SK-N-SH (cell line): ENCODE measurements at regions of chrX and their contacts with region 1.

Region 1: GRCh38 chrX:106894392-106894909 is 8.7 kb downstream of the RIPPLY1 start:
- DNase-seq: peak; percentile 59
- H3K4me3 ChIP-seq: peak overlapping the region in 1 of 2 experiments; percentile 18; a peak in 1 of 4 replicates
- H3K27ac ChIP-seq: peak overlapping the region in 1 of 2 experiments; percentile 40; a peak in 2 of 4 replicates
- H3K4me1 ChIP-seq: peaks cover 0 to 13% of the 10 kb centered on the region in 2 experiments; a peak in 3 of 4 replicates
- H3K27me3 ChIP-seq: peaks cover 26% of the 10 kb centered on the region
- CTCF ChIP-seq: peak; percentile 88
- EP300 ChIP-seq: no peak
- RAD21 ChIP-seq: peak; percentile 82

Region 2: GRCh38 chrX:106726485-106727437 is 167.7 kb before region 1 on chrX and contains the start of gene RNF128:
- CTCF ChIA-PET with region 1: no interaction called
- POLR2A ChIA-PET with region 1: no interaction called
- DNase-seq: peak; percentile 12
- H3K4me3 ChIP-seq: peak within 1 kb of the TSS in 1 of 2 experiments; percentile 28; a peak in 2 of 4 replicates
- H3K27ac ChIP-seq: no peak within 1 kb of the TSS
- H3K4me1 ChIP-seq: no peaks in the 10 kb centered on the region
- H3K27me3 ChIP-seq: peaks cover 51% of the 10 kb centered on the region
- CTCF ChIP-seq: no peak
- EP300 ChIP-seq: no peak
- RAD21 ChIP-seq: no peak
- polyA plus RNA-seq, gene RNF128: not detected in 2 replicates

Region 3: GRCh38 chrX:106874075-106874474 is 20.4 kb before region 1 on chrX:
- CTCF ChIA-PET with region 1: interaction called, 33 read pairs
- POLR2A ChIA-PET with region 1: no interaction called
- DNase-seq: peak; percentile 10
- H3K4me3 ChIP-seq: no peak overlapping the region
- H3K27ac ChIP-seq: no peak overlapping the region
- H3K4me1 ChIP-seq: no peaks in the 10 kb centered on the region
- H3K27me3 ChIP-seq: peaks cover 34% of the 10 kb centered on the region; the same call in 1 of the 2 replicates
- CTCF ChIP-seq: peak; percentile 84
- EP300 ChIP-seq: no peak
- RAD21 ChIP-seq: peak; percentile 62

Region 4: GRCh38 chrX:106906361-106906760 is 11.9 kb after region 1 on chrX:
- CTCF ChIA-PET with region 1: interaction called, 35 read pairs
- POLR2A ChIA-PET with region 1: no interaction called
- DNase-seq: no peak
- H3K4me3 ChIP-seq: no peak overlapping the region
- H3K27ac ChIP-seq: no peak overlapping the region
- H3K4me1 ChIP-seq: no peaks in the 10 kb centered on the region
- H3K27me3 ChIP-seq: peaks cover 18% of the 10 kb centered on the region; the same call in 1 of the 2 replicates
- CTCF ChIP-seq: no peak
- EP300 ChIP-seq: no peak
- RAD21 ChIP-seq: no peak

Region 5: DNA sequence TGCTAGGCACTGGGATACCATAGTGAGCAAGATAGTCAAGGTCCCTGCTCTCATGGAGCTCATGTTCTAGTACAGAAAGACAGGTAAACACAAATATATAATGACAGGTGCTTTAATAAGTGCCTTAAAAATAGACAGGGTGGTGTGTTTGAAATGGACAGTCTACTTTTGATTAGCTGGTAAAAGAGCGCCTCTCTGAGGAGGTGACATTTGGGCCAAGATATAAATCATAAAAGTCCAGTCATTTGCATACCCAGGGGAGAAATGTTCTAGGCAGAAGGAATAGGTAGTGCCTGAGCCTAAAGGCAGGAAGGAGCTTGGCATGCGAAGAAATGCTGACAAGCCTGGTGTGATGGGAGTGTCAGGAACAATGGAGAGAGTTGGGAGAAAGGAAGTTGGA is 395.6 kb after region 1 on chrX:
- CTCF ChIA-PET with region 1: no interaction called
- POLR2A ChIA-PET with region 1: no interaction called
- DNase-seq: no peak
- H3K4me3 ChIP-seq: no peak overlapping the region
- H3K27ac ChIP-seq: no peak overlapping the region
- H3K4me1 ChIP-seq: no peaks in the 10 kb centered on the region
- H3K27me3 ChIP-seq: no peaks in the 10 kb centered on the region
- CTCF ChIP-seq: no peak
- EP300 ChIP-seq: no peak
- RAD21 ChIP-seq: no peak